AG04450 (cell line): ENCODE measurements at regions of chr9 and their contacts with region 1.

Region 1: DNA sequence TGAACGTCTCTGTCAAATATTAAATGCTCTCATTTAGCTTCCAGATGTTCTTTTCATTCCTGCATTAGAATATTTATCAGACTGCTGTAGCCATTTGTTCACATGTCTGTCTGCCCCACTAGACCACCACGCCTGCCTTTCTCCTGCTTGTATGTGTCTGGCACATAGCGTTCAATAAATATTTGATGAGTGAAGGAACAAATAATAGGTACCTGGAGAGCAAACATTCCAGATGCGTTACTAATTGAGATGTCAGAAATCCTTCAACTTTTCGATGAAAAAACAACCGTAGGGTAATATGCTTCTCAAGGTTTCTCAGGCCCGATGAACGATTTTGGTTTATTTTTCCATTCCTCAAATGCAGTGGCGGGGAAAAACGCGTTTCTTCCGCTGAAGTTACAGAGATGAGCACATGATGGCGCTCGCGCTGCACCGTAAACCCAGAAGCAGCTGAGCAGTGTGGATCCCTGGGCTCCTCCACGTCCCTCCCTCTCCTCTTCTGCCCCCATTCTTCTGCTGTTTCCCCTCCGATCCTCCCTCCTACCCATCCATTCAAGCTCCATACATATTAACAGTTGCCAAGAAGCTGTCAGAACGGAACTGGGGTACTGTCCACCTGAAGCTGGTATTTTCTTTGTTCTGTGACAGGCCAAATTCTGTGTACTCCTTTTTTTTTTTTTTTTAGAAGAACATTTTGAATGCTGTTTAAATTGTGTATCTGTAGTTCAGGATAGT is 245.4 kb downstream of the MPDZ start:
- DNase-seq: peak; percentile 13
- H3K4me3 ChIP-seq: peak overlapping the region; percentile 51
- H3K27ac ChIP-seq: no peak overlapping the region
- H3K27me3 ChIP-seq: no peaks in the 10 kb centered on the region
- CTCF ChIP-seq: peak; percentile 86

Region 2: GRCh38 chr9:13017260-13017659 is 16.9 kb before region 1 on chr9:
- CTCF ChIA-PET with region 1: interaction called, 10 read pairs
- POLR2A ChIA-PET with region 1: no interaction called
- DNase-seq: no peak
- H3K4me3 ChIP-seq: no peak overlapping the region
- H3K27ac ChIP-seq: no peak overlapping the region
- H3K27me3 ChIP-seq: no peaks in the 10 kb centered on the region
- CTCF ChIP-seq: no peak

Region 3: DNA sequence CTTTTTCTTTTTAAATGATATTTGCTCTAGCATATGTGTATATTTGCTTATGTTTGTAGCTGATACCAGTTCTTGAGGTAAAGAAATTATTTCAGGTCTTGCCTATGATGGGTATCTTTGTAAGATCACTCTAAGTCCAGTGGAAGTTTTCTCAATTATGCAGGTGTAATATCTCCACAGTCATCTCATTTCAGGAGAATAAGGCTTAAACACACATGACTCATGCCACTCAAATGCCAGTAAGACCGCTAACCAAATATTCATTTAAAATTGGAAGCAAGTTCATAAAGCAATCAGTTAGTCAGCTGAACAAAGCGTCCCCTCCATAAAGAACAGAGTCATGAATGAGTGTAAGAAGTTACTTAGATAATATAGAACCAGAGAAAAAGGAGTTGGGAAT is 10.7 kb before region 1 on chr9:
- CTCF ChIA-PET with region 1: interaction called, 11 read pairs
- POLR2A ChIA-PET with region 1: no interaction called
- DNase-seq: no peak
- H3K4me3 ChIP-seq: no peak overlapping the region
- H3K27ac ChIP-seq: no peak overlapping the region
- H3K27me3 ChIP-seq: no peaks in the 10 kb centered on the region
- CTCF ChIP-seq: no peak

Region 4: GRCh38 chr9:13165236-13165945 is 131.3 kb after region 1 on chr9:
- CTCF ChIA-PET with region 1: no interaction called
- POLR2A ChIA-PET with region 1: no interaction called
- DNase-seq: no peak
- H3K4me3 ChIP-seq: no peak overlapping the region
- H3K27ac ChIP-seq: no peak overlapping the region
- H3K27me3 ChIP-seq: no peaks in the 10 kb centered on the region
- CTCF ChIP-seq: no peak

Region 5: GRCh38 chr9:13274886-13275641 is 240.9 kb after region 1 on chr9:
- CTCF ChIA-PET with region 1: no interaction called
- POLR2A ChIA-PET with region 1: no interaction called
- DNase-seq: no peak
- H3K4me3 ChIP-seq: no peak overlapping the region
- H3K27ac ChIP-seq: no peak overlapping the region
- H3K27me3 ChIP-seq: no peaks in the 10 kb centered on the region
- CTCF ChIP-seq: no peak